Calu3 (cell line): ENCODE measurements at regions of chr15 and their contacts with region 1.

Region 1: DNA sequence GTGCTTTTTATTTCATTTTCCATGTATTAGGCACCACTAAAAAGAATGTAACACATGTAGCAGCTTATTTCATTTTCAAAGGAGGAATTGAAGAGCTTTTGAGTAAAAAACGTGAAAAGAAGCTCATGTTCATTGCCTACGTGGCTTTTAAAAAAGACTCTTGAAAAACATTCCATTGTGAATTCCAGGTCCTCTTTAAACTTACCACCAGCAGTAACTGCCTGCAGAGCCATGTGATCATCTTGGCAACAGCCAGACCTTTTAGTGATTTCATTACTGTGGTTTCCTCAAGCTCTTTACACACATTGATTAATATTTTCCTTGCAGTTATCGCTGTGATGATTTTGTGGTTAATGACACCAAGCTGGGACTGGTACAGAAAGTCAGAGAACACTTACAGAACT is 43.8 kb upstream of the FBXL22 start:
- DNase-seq: peak; percentile 56
- H3K4me3 Mint-ChIP-seq: peak overlapping the region; percentile 19
- H3K27ac Mint-ChIP-seq: peak overlapping the region; percentile 57
- H3K4me1 Mint-ChIP-seq: peaks cover 23% of the 10 kb centered on the region
- H3K27me3 Mint-ChIP-seq: no peaks in the 10 kb centered on the region
- CTCF ChIP-seq: no peak

Region 2: DNA sequence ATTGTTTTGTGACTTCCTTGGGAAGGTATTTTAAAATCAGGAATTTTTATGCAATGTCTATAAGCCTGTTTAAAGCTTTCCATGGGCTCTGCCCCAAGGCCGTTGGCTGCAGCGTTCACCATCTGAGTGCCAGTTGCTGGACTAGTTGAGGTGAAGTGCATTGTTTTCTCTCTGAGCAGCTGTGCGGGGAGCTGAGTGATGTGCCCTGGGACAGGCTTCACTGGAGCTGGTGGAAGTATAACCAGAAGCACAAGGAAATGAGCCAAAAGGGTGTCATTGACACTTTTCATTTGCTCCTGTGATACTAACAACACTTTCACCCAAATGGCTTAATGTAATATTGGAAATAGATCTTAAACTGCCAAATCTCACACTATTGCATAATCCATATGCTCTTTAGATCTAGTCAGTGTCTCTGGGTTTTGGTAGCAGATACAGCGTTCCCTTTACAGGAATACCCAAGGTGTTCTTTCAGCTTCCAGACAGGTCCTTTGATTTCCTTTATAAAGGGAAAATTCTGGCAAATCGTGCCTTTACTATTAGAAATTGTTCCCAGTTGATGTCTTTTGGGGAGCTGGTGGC is 246.8 kb before region 1 on chr15:
- CTCF ChIA-PET with region 1: no interaction called
- intact Hi-C with region 1: loop called (anchors 10 kb)
- DNase-seq: no peak
- H3K4me3 Mint-ChIP-seq: no peak overlapping the region
- H3K27ac Mint-ChIP-seq: no peak overlapping the region
- H3K4me1 Mint-ChIP-seq: peaks cover 17% of the 10 kb centered on the region
- H3K27me3 Mint-ChIP-seq: no peaks in the 10 kb centered on the region
- CTCF ChIP-seq: no peak

Region 3: GRCh38 chr15:63461230-63461985 is 92.0 kb before region 1 on chr15:
- CTCF ChIA-PET with region 1: interaction called, 14 read pairs
- intact Hi-C with region 1: loop called (anchors 2 kb)
- DNase-seq: peak; percentile 72
- H3K4me3 Mint-ChIP-seq: peak overlapping the region; percentile 81
- H3K27ac Mint-ChIP-seq: peak overlapping the region; percentile 98
- H3K4me1 Mint-ChIP-seq: peaks cover 61% of the 10 kb centered on the region
- H3K27me3 Mint-ChIP-seq: no peaks in the 10 kb centered on the region
- CTCF ChIP-seq: peak; percentile 19

Region 4: GRCh38 chr15:63466378-63467192 is 86.8 kb before region 1 on chr15:
- CTCF ChIA-PET with region 1: interaction called, 14 read pairs
- intact Hi-C with region 1: loop called (anchors 2 kb)
- DNase-seq: peak; percentile 69
- H3K4me3 Mint-ChIP-seq: no peak overlapping the region
- H3K27ac Mint-ChIP-seq: no peak overlapping the region
- H3K4me1 Mint-ChIP-seq: peaks cover 51% of the 10 kb centered on the region
- H3K27me3 Mint-ChIP-seq: no peaks in the 10 kb centered on the region
- CTCF ChIP-seq: peak; percentile 68

Region 5: GRCh38 chr15:63514531-63514943 is 38.9 kb before region 1 on chr15:
- CTCF ChIA-PET with region 1: interaction called, 3 read pairs
- intact Hi-C with region 1: loop called (anchors 5 kb)
- DNase-seq: peak; percentile 28
- H3K4me3 Mint-ChIP-seq: no peak overlapping the region
- H3K27ac Mint-ChIP-seq: peak overlapping the region; percentile 57
- H3K4me1 Mint-ChIP-seq: peaks cover 80% of the 10 kb centered on the region
- H3K27me3 Mint-ChIP-seq: no peaks in the 10 kb centered on the region
- CTCF ChIP-seq: no peak